ENCODE measurements at regions of chr20 and their contacts with region 1.

Region 1: DNA sequence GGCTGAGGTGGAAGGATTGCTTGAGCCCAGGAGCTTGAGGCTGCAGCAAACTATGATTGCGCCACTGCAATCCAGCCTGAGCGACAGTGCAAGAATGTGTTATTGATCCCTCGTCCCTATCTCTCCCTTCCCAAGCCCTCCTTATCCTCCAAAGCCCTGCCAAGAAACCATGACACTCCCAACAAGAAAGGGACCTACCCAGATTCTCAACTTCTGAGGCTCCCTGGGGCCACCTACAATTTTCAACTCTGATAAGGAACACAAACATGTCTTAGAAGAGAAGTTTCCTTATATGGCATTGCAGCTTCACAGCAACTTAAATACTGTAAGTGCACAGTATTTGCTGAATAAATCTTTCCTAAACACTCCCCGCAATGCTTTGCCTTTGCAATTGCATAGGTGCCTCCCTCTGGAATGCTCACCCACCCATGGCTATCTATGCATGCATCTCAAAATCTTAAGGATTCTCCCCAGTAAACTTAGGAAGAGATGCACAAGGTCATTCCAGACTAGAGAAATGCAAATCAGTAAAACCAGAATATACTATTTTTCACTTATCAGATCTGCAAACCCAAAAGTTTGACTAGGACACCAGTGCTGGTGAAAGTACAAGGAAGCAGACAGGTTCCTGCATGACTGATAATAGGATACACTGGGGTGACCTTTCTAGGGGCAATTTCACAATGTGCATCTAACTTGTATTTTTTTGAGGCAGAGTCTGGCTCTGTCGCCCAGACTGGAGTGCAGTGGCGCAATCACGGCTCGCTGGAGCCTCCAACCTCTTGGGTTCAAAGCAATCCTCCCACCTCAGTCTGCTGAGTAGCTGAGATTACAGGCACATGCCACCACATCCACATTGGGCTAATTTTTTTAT is 11.6 kb downstream of the COMMD7 start:
- DNase-seq: peak; percentile 98 to 99
- H3K4me3 ChIP-seq: no peak overlapping the region
- H3K4me3 Mint-ChIP-seq: peak overlapping the region; percentile 20
- H3K27ac Mint-ChIP-seq: peak overlapping the region; percentile 88
- H3K4me1 ChIP-seq: peaks cover 51% of the 10 kb centered on the region
- H3K4me1 Mint-ChIP-seq: peaks cover 54% of the 10 kb centered on the region
- H3K27me3 ChIP-seq: no peaks in the 10 kb centered on the region
- H3K27me3 Mint-ChIP-seq: no peaks in the 10 kb centered on the region
- CTCF ChIP-seq: no peak

Region 2: GRCh38 chr20:31901615-31902014 is 830.0 kb before region 1 on chr20:
- CTCF ChIA-PET with region 1: no interaction called
- POLR2A ChIA-PET with region 1: no interaction called
- intact Hi-C with region 1: no loop called
- DNase-seq: peak in 1 of 2 experiments; percentile 31
- H3K4me3 ChIP-seq: no peak overlapping the region
- H3K4me3 Mint-ChIP-seq: no peak overlapping the region
- H3K27ac Mint-ChIP-seq: no peak overlapping the region
- H3K4me1 ChIP-seq: no peaks in the 10 kb centered on the region
- H3K4me1 Mint-ChIP-seq: no peaks in the 10 kb centered on the region
- H3K27me3 ChIP-seq: peaks cover 2% of the 10 kb centered on the region
- H3K27me3 Mint-ChIP-seq: peaks cover 7% of the 10 kb centered on the region
- CTCF ChIP-seq: no peak

Region 3: GRCh38 chr20:32474967-32475811 is 256.4 kb before region 1 on chr20:
- CTCF ChIA-PET with region 1: no interaction called
- POLR2A ChIA-PET with region 1: no interaction called
- intact Hi-C with region 1: loop called (anchors 5 kb)
- DNase-seq: peak; percentile 99 to 100
- H3K4me3 ChIP-seq: peak overlapping the region; percentile 42
- H3K4me3 Mint-ChIP-seq: peak overlapping the region; percentile 93
- H3K27ac Mint-ChIP-seq: peak overlapping the region; percentile 93
- H3K4me1 ChIP-seq: peaks cover 79% of the 10 kb centered on the region
- H3K4me1 Mint-ChIP-seq: peaks cover 69% of the 10 kb centered on the region
- H3K27me3 ChIP-seq: no peaks in the 10 kb centered on the region
- H3K27me3 Mint-ChIP-seq: no peaks in the 10 kb centered on the region
- CTCF ChIP-seq: peak in 1 of 2 experiments; percentile 18

Region 4: GRCh38 chr20:32681175-32682084 is 50.2 kb before region 1 on chr20:
- CTCF ChIA-PET with region 1: interaction called, 6 read pairs
- POLR2A ChIA-PET with region 1: no interaction called
- intact Hi-C with region 1: loop called (anchors 1 kb)
- DNase-seq: peak; percentile 64 to 72
- H3K4me3 ChIP-seq: no peak overlapping the region
- H3K4me3 Mint-ChIP-seq: no peak overlapping the region
- H3K27ac Mint-ChIP-seq: peak overlapping the region; percentile 86
- H3K4me1 ChIP-seq: peaks cover 46% of the 10 kb centered on the region
- H3K4me1 Mint-ChIP-seq: peaks cover 49% of the 10 kb centered on the region
- H3K27me3 ChIP-seq: no peaks in the 10 kb centered on the region
- H3K27me3 Mint-ChIP-seq: no peaks in the 10 kb centered on the region
- CTCF ChIP-seq: no peak

Region 5: DNA sequence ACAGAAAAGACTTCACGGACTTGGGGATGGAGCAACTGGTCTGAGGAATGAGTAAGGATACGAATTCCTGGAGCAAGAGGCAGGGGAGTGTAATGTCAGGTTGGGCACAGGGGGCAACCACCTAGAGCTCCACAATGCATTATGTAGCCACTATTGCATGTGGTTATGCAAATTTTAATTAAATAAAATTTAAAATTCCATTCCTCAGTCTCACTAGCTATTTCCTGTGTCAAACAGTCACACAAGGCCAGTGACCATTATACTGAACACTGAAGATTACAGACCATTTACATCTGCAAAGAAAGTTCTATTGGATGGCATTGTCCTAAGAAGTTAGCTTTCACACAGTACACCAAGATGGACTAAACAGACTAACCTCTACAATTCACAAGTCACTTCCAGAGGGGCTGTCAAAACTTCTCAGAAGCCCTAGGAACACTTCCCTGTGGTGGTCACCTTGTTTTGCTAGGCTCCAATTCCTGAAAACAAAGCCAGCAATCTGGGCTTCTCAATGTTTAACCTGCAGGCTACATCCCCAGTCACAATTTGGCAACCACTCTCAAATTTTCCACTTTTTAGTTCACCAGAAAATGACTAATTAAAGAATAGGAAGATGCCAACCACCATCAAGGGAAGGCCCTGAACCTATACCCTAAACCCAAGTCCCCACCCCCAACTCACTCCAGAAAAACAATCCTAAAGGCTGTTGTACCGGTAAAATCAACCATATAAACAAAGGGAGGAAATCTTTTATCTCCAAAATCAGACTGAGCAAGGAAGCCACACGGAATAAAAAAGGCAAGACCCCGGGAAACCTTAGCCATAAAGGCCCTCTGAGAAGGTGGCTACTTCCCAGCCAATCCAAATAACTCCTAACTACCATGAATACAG is 23.7 kb before region 1 on chr20:
- CTCF ChIA-PET with region 1: no interaction called
- POLR2A ChIA-PET with region 1: interaction called, 7 read pairs
- intact Hi-C with region 1: loop called (anchors 1 kb)
- DNase-seq: no peak
- H3K4me3 ChIP-seq: no peak overlapping the region
- H3K4me3 Mint-ChIP-seq: no peak overlapping the region
- H3K27ac Mint-ChIP-seq: no peak overlapping the region
- H3K4me1 ChIP-seq: peaks cover 17% of the 10 kb centered on the region
- H3K4me1 Mint-ChIP-seq: peaks cover 19% of the 10 kb centered on the region
- H3K27me3 ChIP-seq: no peaks in the 10 kb centered on the region
- H3K27me3 Mint-ChIP-seq: no peaks in the 10 kb centered on the region
- CTCF ChIP-seq: no peak

Region 6: GRCh38 chr20:32762149-32762753 is 30.6 kb after region 1 on chr20 and contains the start of gene DNMT3B:
- CTCF ChIA-PET with region 1: interaction called, 11 read pairs
- POLR2A ChIA-PET with region 1: interaction called, 10 read pairs
- intact Hi-C with region 1: loop called (anchors 1 kb)
- DNase-seq: peak; percentile 97 to 99
- H3K4me3 ChIP-seq: peak within 1 kb of the TSS; percentile 87
- H3K4me3 Mint-ChIP-seq: peak within 1 kb of the TSS; percentile 100
- H3K27ac Mint-ChIP-seq: peak within 1 kb of the TSS; percentile 93
- H3K4me1 ChIP-seq: peaks cover 25% of the 10 kb centered on the region
- H3K4me1 Mint-ChIP-seq: peaks cover 33% of the 10 kb centered on the region
- H3K27me3 ChIP-seq: no peaks in the 10 kb centered on the region
- H3K27me3 Mint-ChIP-seq: no peaks in the 10 kb centered on the region
- CTCF ChIP-seq: peak in 1 of 2 experiments; percentile 31
- total RNA-seq, gene DNMT3B: 95.5 and 105 TPM in 2 replicates